Transverse colon (tissue), 4 donors: ENCODE measurements at regions of chr3 and their contacts with region 1.

Region 1: GRCh38 chr3:153714588-153715290 is 406.5 kb upstream of the ARHGEF26 start:
- DNase-seq: no peak
- H3K4me3 ChIP-seq: no peak overlapping the region
- H3K27ac ChIP-seq: no peak overlapping the region
- H3K4me1 ChIP-seq: no peaks in the 10 kb centered on the region
- H3K27me3 ChIP-seq: no peaks in the 10 kb centered on the region
- CTCF ChIP-seq: no peak
- EP300 ChIP-seq: no peak
- POLR2A ChIP-seq: no peak

Region 2: DNA sequence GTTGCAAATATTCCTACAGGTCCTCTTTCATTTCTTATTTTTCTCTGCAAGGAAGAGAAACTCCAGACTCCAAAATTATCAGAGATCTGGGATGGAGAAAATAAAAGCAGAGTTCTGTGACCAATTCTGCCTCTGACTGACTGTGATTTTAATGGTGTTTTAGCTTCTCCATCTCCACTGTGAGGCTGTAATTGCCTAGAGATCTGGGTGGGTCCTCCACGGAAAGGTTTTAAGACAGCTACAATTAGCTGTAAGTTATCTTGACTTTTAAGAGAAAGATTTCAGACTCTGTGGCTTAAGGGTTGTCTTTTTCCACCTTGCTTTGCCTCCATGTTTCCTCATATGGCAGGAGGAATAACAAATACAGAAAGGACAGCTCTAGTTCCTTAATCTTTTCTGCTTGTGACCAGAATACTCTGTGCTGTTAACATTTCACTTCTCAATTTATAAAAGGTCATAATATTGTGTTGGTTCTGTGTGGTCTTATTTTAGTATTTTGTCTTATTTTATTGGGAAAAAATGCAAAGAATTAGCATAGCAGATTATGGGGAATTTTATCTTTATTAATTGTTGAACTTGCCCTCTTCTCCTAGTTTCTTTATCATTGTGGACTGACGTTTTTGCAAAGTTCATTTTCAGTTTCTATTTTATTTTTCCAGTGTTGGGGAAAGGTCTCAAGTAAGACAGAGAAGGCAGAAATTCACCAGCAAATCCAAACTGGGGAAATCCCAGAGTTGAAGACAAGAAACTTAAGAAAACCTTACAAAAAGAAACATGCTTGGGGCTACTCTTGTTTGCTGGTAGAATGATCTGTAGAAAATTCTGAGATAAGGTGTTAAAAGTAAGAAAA is 394.8 kb before region 1 on chr3:
- in situ Hi-C with region 1: no loop called
- intact Hi-C with region 1: no loop called
- DNase-seq: no peak
- H3K4me3 ChIP-seq: no peak overlapping the region
- H3K27ac ChIP-seq: no peak overlapping the region
- H3K4me1 ChIP-seq: peaks cover 0 to 3% (median 0%) of the 10 kb centered on the region in 4 donors
- H3K27me3 ChIP-seq: no peaks in the 10 kb centered on the region
- CTCF ChIP-seq: no peak
- EP300 ChIP-seq: no peak
- POLR2A ChIP-seq: no peak

Region 3: DNA sequence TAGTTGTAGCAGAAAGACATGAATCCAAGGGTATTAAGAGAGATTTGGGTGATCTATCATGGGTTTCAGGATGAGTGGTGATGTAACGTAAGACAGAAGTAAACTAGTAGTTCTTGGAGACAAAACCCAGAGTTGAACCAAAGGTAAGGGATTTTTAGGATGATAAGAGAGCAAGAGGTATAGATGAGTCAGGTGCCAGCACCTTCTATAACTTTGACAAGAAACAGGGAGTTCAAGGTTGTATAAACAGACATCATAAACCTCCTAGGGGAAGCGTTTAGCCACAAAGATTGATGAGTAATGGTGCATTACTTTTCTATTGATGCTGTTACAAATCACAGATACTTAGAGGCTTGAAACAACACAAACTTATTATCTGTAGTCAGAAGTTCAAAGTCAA is 40.9 kb before region 1 on chr3:
- in situ Hi-C with region 1: no loop called
- intact Hi-C with region 1: loop called (anchors 1 kb)
- DNase-seq: no peak
- H3K4me3 ChIP-seq: no peak overlapping the region
- H3K27ac ChIP-seq: no peak overlapping the region
- H3K4me1 ChIP-seq: no peaks in the 10 kb centered on the region
- H3K27me3 ChIP-seq: no peaks in the 10 kb centered on the region
- CTCF ChIP-seq: no peak
- EP300 ChIP-seq: no peak
- POLR2A ChIP-seq: no peak

Region 4: DNA sequence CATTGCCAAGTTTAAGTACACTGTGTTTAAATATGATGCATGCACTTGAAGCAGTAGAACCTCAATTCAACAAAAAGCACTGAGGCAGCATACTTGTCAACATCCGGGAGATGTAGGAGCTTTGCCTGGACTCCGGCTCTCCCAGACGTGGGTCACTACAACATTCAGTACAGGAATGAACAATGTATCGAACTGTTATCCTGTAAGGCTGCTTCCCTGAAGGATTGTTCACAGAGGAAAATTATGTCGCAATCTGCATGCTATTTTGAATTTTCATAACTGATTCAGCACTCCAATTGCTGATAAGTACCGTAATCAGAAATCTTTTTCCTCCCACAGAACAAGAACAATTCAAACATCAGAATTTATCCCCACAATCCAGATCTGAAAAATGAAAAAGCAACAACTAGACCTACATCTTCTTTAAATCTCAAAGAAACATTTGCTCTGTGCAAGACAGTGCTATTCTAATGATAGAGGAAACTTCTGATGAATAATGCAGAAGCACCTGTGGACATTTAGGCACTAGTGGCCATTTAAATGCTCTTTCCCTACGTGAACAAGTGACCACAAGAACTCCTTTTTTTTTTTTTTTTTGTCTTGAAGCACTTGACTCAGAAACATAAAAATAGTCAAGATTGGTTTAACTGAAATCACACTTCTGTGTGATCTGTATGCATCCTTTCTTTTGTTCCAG is 1916.7 kb after region 1 on chr3:
- in situ Hi-C with region 1: no loop called
- intact Hi-C with region 1: loop called (anchors 5 kb)
- DNase-seq: no peak
- H3K4me3 ChIP-seq: no peak overlapping the region
- H3K27ac ChIP-seq: no peak overlapping the region
- H3K4me1 ChIP-seq: no peaks in the 10 kb centered on the region
- H3K27me3 ChIP-seq: no peaks in the 10 kb centered on the region
- CTCF ChIP-seq: no peak
- EP300 ChIP-seq: no peak
- POLR2A ChIP-seq: no peak